ENCODE measurements at regions of chr2 and their contacts with region 1.

Region 1: GRCh38 chr2:191811807-191812602 is 34.9 kb downstream of the CAVIN2 start:
- H3K4me3 Mint-ChIP-seq: no peak overlapping the region
- H3K27ac Mint-ChIP-seq: no peak overlapping the region
- H3K4me1 Mint-ChIP-seq: no peaks in the 10 kb centered on the region
- H3K27me3 Mint-ChIP-seq: no peaks in the 10 kb centered on the region

Region 2: GRCh38 chr2:191555092-191555742 is 256.8 kb before region 1 on chr2:
- intact Hi-C with region 1: loop called (anchors 1 kb)
- H3K4me3 Mint-ChIP-seq: no peak overlapping the region
- H3K27ac Mint-ChIP-seq: no peak overlapping the region
- H3K4me1 Mint-ChIP-seq: peaks cover 5% of the 10 kb centered on the region
- H3K27me3 Mint-ChIP-seq: peaks cover 3% of the 10 kb centered on the region

Region 3: DNA sequence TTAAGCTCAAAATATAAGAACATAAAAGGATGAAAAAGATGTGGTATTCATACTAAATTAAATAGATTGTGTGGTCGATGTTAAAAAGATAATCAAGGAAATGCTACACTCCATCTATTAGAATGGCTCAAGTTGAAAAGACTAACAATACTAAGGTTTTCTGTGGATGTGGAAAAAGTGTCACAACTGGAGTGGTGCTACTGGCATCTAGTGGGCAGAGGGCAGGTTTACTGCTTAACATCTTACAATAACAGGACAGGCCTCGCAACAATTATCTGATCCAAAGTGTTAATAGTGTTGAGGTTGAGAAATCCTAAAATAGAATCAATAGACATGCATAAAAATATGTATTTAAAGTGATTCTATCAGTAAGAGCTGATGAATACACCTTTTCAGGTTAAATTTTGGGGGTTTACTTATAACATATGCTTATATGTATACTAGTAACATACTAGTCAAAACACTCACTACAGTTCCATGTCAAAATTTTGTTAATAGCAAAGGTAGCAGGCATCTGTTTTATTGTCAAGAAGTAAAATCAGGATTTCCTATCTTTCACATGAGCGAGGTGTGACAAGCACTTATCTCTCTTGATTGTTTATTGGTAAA is 474.2 kb after region 1 on chr2:
- intact Hi-C with region 1: loop called (anchors 10 kb)
- H3K4me3 Mint-ChIP-seq: no peak overlapping the region
- H3K27ac Mint-ChIP-seq: no peak overlapping the region
- H3K4me1 Mint-ChIP-seq: no peaks in the 10 kb centered on the region
- H3K27me3 Mint-ChIP-seq: no peaks in the 10 kb centered on the region

Measured in dendritic cell treated with granulocyte-macrophage colony-stimulating factor and Interleukin-4, amounts not matched to agents 40 ng/mL and 50 ng/mL, for 4 days (primary cell).